Mammary epithelial cell (primary cell): ENCODE measurements at regions of chr10 and their contacts with region 1.

Region 1: GRCh38 chr10:58064714-58065528 is 202.8 kb downstream of the IPMK start:
- DNase-seq: peak; percentile 43
- H3K4me3 ChIP-seq: no peak overlapping the region
- H3K27ac ChIP-seq: no peak overlapping the region
- H3K4me1 ChIP-seq: no peaks in the 10 kb centered on the region
- H3K27me3 ChIP-seq: no peaks in the 10 kb centered on the region
- CTCF ChIP-seq: peak; percentile 76 to 86

Region 2: GRCh38 chr10:57579926-57580325 is 485.0 kb before region 1 on chr10:
- CTCF ChIA-PET with region 1: no interaction called
- dilution Hi-C with region 1: no loop called
- in situ Hi-C with region 1: loop called (anchors 25 kb)
- intact Hi-C with region 1: loop called (anchors 1 kb)
- DNase-seq: peak; percentile 27
- H3K4me3 ChIP-seq: no peak overlapping the region
- H3K27ac ChIP-seq: no peak overlapping the region
- H3K4me1 ChIP-seq: no peaks in the 10 kb centered on the region
- H3K27me3 ChIP-seq: peaks cover under 1% of the 10 kb centered on the region
- CTCF ChIP-seq: peak; percentile 37 to 75

Region 3: DNA sequence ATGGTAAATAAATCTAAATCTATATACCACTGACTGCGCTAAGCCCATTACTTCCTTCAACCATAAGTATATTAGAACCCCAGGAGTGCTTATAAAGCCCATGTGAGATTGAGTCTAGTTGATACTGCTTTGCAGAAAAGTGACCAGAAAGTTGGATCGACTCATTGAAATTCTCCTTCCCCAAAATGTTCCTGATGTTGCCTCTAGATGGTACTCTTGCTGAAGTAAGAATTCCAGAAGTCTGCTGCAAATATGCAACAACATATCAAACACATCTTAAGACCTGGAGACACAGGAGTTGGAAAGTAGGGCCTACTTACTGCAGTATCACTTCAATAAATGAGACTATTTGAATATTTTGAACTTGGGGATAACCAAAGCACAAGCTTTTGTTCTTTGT is 348.0 kb before region 1 on chr10:
- CTCF ChIA-PET with region 1: interaction called, 4 read pairs
- dilution Hi-C with region 1: no loop called
- in situ Hi-C with region 1: loop called (anchors 10 to 25 kb)
- intact Hi-C with region 1: loop called (anchors 1 kb)
- DNase-seq: peak; percentile 45
- H3K4me3 ChIP-seq: no peak overlapping the region
- H3K27ac ChIP-seq: no peak overlapping the region
- H3K4me1 ChIP-seq: no peaks in the 10 kb centered on the region
- H3K27me3 ChIP-seq: no peaks in the 10 kb centered on the region
- CTCF ChIP-seq: peak; percentile 56 to 75

Region 4: DNA sequence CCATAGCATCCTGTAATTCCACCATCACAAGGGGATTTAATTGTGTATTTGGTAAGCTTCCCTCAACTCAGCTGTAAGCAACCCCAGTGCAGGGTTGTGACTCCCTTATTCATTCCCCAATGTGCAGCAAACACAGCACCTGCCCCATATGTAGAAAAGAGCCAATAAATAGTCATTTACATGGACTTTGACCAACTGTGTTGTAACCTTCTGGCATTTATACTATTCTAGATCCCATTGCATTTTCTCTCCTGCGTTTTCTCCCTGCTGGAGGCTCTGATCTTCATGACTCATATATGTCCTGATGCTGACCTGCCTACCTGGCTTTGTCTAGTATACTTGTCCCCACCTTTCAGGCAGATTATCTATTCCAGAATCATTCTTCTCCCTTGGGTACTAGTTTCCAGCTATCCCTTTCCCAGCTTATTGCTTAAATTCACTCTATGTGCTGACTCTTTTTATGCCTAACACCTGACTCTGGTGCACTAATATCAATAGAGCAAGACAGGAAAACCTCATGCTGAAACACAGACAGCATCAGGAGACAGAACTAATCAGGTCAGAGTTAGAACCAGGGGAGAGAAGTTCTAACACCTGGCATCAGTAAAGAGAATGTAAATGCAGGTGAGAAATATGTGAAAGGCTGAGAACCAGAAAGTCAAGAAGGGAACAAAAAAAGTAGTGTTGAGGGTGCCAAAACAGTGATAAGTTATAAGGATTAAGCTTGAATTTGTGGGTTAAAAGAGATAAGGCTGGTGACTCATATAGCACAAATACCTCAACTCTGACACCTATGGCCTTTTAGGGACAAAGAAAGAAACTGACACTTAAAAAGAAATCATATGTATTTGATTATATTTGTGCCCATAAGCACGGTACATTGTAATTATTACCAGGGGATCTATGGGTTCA is 199.9 kb before region 1 on chr10:
- CTCF ChIA-PET with region 1: no interaction called
- dilution Hi-C with region 1: no loop called
- in situ Hi-C with region 1: no loop called
- intact Hi-C with region 1: loop called (anchors 5 kb)
- DNase-seq: peak; percentile 37
- H3K4me3 ChIP-seq: no peak overlapping the region
- H3K27ac ChIP-seq: no peak overlapping the region
- H3K4me1 ChIP-seq: peaks cover 3% of the 10 kb centered on the region
- H3K27me3 ChIP-seq: peaks cover 2% of the 10 kb centered on the region
- CTCF ChIP-seq: no peak

Region 5: DNA sequence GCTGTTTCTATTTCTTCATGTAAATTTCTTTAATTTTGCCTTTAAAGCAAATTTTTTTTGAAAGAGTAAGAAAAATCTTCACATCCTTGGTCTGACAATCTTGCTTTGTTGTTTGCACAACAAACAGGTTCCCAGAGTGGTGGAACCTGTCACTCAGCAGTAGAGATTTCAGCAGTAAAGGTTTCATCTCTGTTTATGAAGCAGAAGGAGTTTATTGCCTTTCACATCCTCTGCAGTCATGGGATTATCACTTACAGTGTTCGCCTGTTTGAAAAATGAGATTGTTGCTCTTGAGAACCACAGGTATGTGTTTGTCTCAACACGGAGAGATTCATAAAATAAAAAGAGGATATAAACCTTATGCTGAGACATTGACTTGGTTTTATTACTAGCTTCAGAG is 139.9 kb before region 1 on chr10:
- CTCF ChIA-PET with region 1: no interaction called
- dilution Hi-C with region 1: no loop called
- in situ Hi-C with region 1: no loop called
- intact Hi-C with region 1: no loop called
- DNase-seq: peak; percentile 17
- H3K4me3 ChIP-seq: no peak overlapping the region
- H3K27ac ChIP-seq: no peak overlapping the region
- H3K4me1 ChIP-seq: peaks cover 7% of the 10 kb centered on the region
- H3K27me3 ChIP-seq: no peaks in the 10 kb centered on the region
- CTCF ChIP-seq: no peak

Region 6: GRCh38 chr10:58017719-58018367 is 47.1 kb before region 1 on chr10:
- CTCF ChIA-PET with region 1: no interaction called
- dilution Hi-C with region 1: no loop called
- in situ Hi-C with region 1: no loop called
- intact Hi-C with region 1: no loop called
- DNase-seq: peak; percentile 70
- H3K4me3 ChIP-seq: no peak overlapping the region
- H3K27ac ChIP-seq: no peak overlapping the region
- H3K4me1 ChIP-seq: peaks cover 5% of the 10 kb centered on the region
- H3K27me3 ChIP-seq: no peaks in the 10 kb centered on the region
- CTCF ChIP-seq: peak in 1 of 2 donors; percentile 8

Region 7: DNA sequence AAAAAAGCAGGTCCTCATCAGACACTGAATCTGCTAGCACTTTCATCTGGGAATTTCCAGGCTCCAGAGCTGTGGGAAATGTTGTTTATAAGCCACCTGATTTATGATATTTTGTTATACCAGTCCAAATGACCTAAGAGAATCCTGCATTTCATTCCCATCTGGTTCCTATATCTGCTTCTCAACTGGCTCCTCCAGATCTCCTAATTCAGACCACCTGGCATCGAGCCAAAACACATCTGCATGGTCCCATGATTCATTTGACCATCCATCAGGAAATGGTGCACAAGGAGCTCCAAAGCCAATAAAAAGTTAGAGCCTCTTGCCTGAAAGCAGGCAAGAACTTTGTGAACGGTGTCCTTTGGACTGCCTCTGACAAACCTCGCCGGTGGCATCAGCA is 93.9 kb after region 1 on chr10:
- CTCF ChIA-PET with region 1: no interaction called
- dilution Hi-C with region 1: no loop called
- in situ Hi-C with region 1: no loop called
- intact Hi-C with region 1: no loop called
- DNase-seq: no peak
- H3K4me3 ChIP-seq: no peak overlapping the region
- H3K27ac ChIP-seq: no peak overlapping the region
- H3K4me1 ChIP-seq: peaks cover 12% of the 10 kb centered on the region
- H3K27me3 ChIP-seq: no peaks in the 10 kb centered on the region
- CTCF ChIP-seq: no peak

Region 8: GRCh38 chr10:58291538-58292174 is 226.7 kb after region 1 on chr10:
- CTCF ChIA-PET with region 1: no interaction called
- dilution Hi-C with region 1: no loop called
- in situ Hi-C with region 1: no loop called
- intact Hi-C with region 1: no loop called
- DNase-seq: peak; percentile 42
- H3K4me3 ChIP-seq: no peak overlapping the region
- H3K27ac ChIP-seq: no peak overlapping the region
- H3K4me1 ChIP-seq: no peaks in the 10 kb centered on the region
- H3K27me3 ChIP-seq: no peaks in the 10 kb centered on the region
- CTCF ChIP-seq: peak; percentile 65 to 81